PC-9 (cell line): ENCODE measurements at regions of chr7 and their contacts with region 1.

Region 1: DNA sequence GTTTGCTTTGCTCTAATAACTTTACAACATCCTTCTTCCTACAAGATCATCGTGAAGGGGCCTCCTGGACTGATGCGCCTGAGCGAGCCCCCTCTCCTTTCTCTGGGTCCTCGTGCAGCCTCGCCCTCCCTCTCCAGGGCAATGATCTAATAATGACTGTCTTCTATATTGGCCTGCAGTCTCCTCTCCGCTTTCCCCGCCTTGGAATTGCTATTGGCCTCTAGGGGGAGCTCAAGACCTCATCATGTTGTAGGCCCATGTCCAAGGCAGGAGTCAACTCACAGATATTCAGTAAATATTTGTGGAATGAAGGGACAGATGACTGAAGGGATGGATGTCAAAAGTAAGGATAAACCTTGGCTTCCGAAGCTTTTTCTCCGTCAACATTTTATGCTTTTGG is 1180.3 kb downstream of the TYW1 start:
- DNase-seq: peak; percentile 26 to 68
- H3K4me3 ChIP-seq: no peak overlapping the region
- H3K27ac ChIP-seq: no peak overlapping the region
- H3K4me1 ChIP-seq: no peaks in the 10 kb centered on the region
- H3K27me3 ChIP-seq: no peaks in the 10 kb centered on the region
- CTCF ChIP-seq: peak; percentile 89

Region 2: GRCh38 chr7:69067372-69067771 is 890.4 kb after region 1 on chr7:
- CTCF ChIA-PET with region 1: no interaction called
- POLR2A ChIA-PET with region 1: no interaction called
- intact Hi-C with region 1: loop called (anchors 5 kb)
- DNase-seq: peak in 1 of 2 experiments; percentile 14
- H3K4me3 ChIP-seq: no peak overlapping the region
- H3K27ac ChIP-seq: no peak overlapping the region
- H3K4me1 ChIP-seq: no peaks in the 10 kb centered on the region
- H3K27me3 ChIP-seq: no peaks in the 10 kb centered on the region
- CTCF ChIP-seq: peak; percentile 69